Activated T-helper 1 cell treated with anti-CD3 and anti-CD28 coated beads, Interleukin-12 subunit alpha, Interleukin-12 subunit beta, Interleukin-2, Interleukin-4 antibody, amounts not matched to agents 30 ng/mL and 10 ng/mL and 1 ng/mL, durations not matched to agents 14 hours and 24 hours and 36 hours (primary cell): ENCODE measurements at regions of chrX and their contacts with region 1.

Region 1: DNA sequence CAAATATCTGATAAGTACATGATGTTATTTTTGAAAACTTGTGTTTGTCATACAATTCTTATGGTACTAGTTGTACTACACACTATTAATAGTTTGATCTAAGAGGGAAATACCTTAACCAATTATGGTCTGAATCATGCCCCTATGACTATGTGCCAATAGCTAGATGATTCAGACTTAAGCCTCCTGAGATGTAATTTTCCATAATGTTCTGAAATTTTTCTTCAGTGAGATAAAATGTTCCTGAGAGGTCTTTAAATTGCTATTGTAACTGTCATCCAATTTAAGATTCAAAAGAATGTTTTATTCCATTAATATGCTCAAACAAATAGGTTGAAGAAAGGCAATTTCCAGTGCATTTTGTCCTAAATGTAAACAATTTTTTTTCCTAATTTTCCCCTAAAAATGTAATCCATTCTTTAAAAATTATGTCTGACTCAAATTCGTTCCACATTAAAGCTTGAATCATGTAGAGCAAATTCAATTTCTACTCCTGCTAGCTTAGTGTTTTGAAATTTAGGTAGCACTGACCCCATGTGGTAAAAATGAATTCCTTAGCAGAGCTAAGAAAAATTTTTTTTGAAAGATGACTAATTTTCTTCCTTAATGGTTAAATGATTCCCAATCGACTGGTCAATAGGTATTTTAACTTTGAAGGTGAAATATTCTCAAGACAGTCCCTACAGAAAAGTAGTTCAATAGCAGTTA is 49.1 kb downstream of the APOOL start:
- DNase-seq: no peak
- H3K4me3 Mint-ChIP-seq: no peak overlapping the region
- H3K27ac Mint-ChIP-seq: no peak overlapping the region
- H3K4me1 Mint-ChIP-seq: no peaks in the 10 kb centered on the region
- H3K27me3 Mint-ChIP-seq: no peaks in the 10 kb centered on the region

Region 2: GRCh38 chrX:84046403-84046984 is 1006.3 kb before region 1 on chrX:
- intact Hi-C with region 1: loop called (anchors 10 kb)
- DNase-seq: no peak
- H3K4me3 Mint-ChIP-seq: no peak overlapping the region
- H3K27ac Mint-ChIP-seq: no peak overlapping the region
- H3K4me1 Mint-ChIP-seq: no peaks in the 10 kb centered on the region
- H3K27me3 Mint-ChIP-seq: no peaks in the 10 kb centered on the region

Region 3: GRCh38 chrX:84240848-84241565 is 811.8 kb before region 1 on chrX:
- intact Hi-C with region 1: no loop called
- DNase-seq: no peak
- H3K4me3 Mint-ChIP-seq: no peak overlapping the region
- H3K27ac Mint-ChIP-seq: no peak overlapping the region
- H3K4me1 Mint-ChIP-seq: no peaks in the 10 kb centered on the region
- H3K27me3 Mint-ChIP-seq: no peaks in the 10 kb centered on the region

Region 4: GRCh38 chrX:84729809-84730208 is 323.0 kb before region 1 on chrX:
- intact Hi-C with region 1: loop called (anchors 1 kb)
- DNase-seq: no peak
- H3K4me3 Mint-ChIP-seq: no peak overlapping the region
- H3K27ac Mint-ChIP-seq: no peak overlapping the region
- H3K4me1 Mint-ChIP-seq: no peaks in the 10 kb centered on the region
- H3K27me3 Mint-ChIP-seq: peaks cover 2% of the 10 kb centered on the region

Region 5: GRCh38 chrX:84924624-84925023 is 128.2 kb before region 1 on chrX:
- intact Hi-C with region 1: no loop called
- DNase-seq: no peak
- H3K4me3 Mint-ChIP-seq: no peak overlapping the region
- H3K27ac Mint-ChIP-seq: no peak overlapping the region
- H3K4me1 Mint-ChIP-seq: no peaks in the 10 kb centered on the region
- H3K27me3 Mint-ChIP-seq: no peaks in the 10 kb centered on the region

Region 6: DNA sequence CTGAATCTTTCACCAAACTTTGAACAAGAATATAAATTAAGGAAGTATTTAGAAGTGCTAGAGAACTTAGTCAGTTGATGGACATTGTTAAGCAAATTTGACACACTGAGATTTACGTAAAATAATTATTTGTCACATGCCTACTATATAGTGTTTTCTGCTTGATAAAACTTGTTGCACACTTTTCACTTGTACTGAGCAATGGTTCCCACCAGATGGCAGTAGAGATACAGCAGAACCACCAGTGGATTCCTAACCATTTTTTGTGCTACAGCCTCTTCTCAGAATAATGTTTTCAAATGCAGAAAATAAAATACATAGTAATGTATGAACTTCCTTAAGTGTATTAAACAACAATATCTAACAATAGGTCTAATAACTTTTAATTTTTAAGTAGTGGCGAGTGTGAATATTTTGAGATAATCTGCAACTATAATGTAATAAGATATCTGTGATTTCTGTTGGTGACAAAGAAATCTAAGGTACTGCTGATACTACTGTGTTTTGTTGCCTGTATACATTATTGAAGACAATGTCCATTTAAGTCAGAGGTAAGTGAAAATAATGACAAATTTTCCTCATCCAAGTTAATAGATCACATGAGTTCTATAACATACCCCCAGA is 32.1 kb after region 1 on chrX:
- intact Hi-C with region 1: no loop called
- DNase-seq: no peak
- H3K4me3 Mint-ChIP-seq: no peak overlapping the region
- H3K27ac Mint-ChIP-seq: no peak overlapping the region
- H3K4me1 Mint-ChIP-seq: no peaks in the 10 kb centered on the region
- H3K27me3 Mint-ChIP-seq: no peaks in the 10 kb centered on the region